ENCODE measurements at regions of chr10 and their contacts with region 1.

Region 1: DNA sequence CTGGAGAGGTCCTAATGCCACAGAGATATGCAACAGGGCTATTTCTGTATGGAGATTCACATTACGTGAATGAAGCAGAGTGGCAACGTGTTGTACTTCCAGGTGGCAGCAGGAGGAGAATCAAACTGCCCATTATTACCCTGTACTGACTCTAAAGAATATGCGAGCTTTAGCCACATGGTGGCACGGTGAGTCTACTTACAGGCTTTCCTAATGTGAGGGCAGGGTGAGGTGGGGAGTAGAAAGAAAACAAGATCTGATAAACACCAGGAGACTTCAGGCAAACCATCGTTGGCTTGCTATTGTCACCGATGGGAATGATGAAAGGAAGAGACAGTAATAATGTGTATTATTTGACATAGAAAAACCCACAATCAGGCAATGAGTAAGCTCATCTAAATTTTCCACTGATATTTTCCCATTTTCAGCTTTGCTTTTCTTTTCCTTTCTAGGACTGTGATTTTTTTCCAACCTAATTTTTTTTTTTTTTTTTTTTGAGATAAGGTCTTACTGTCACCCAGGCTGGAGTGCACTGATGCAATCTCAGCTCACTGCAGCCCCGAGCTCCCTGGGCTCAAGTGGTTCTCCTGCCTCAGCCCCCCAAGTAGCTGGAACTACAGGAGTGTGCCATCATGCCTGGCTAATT is 164.3 kb downstream of the BTAF1 start:
- DNase-seq: peak; percentile 89
- ATAC-seq: peak; percentile 100
- H3K4me3 ChIP-seq: no peak overlapping the region
- H3K27ac ChIP-seq: no peak overlapping the region
- H3K4me1 ChIP-seq: peaks cover 12% of the 10 kb centered on the region
- H3K27me3 ChIP-seq: no peaks in the 10 kb centered on the region
- CTCF ChIP-seq: peak; percentile 89

Region 2: GRCh38 chr10:91816981-91817380 is 270.9 kb before region 1 on chr10:
- CTCF ChIA-PET with region 1: no interaction called
- POLR2A ChIA-PET with region 1: no interaction called
- intact Hi-C with region 1: no loop called
- DNase-seq: no peak
- ATAC-seq: no peak
- H3K4me3 ChIP-seq: no peak overlapping the region
- H3K27ac ChIP-seq: no peak overlapping the region
- H3K4me1 ChIP-seq: no peaks in the 10 kb centered on the region
- H3K27me3 ChIP-seq: no peaks in the 10 kb centered on the region
- CTCF ChIP-seq: no peak

Region 3: GRCh38 chr10:92103376-92104090 is 15.7 kb after region 1 on chr10:
- CTCF ChIA-PET with region 1: interaction called, 10 read pairs
- POLR2A ChIA-PET with region 1: no interaction called
- intact Hi-C with region 1: no loop called
- DNase-seq: peak; percentile 48
- ATAC-seq: peak; percentile 49
- H3K4me3 ChIP-seq: no peak overlapping the region
- H3K27ac ChIP-seq: no peak overlapping the region
- H3K4me1 ChIP-seq: peaks cover 31% of the 10 kb centered on the region
- H3K27me3 ChIP-seq: no peaks in the 10 kb centered on the region
- CTCF ChIP-seq: no peak

Region 4: DNA sequence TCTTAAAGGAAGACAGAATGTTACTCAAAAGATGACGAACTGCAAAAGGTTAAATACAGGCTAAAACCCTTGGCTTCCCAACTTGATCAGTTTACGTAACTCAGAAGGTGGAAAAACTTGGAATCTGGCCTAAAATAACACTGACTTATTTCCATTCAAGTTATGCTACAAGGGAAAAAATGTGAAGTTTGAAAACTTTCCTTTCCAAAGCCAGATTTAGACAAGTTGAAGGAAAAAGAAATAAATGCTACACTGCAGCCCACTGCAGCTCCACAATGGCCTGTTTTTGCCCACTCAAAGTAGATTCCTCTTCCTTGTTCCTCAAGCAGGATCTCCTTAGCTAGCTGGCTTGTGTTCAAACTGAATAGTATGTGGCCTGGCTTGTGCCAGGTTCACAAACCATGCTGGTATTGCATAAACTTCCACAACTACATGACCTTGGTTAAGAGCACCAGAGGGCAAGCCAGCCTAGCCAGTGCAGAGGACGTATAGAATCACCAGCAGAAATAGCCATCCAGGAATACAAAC is 36.8 kb after region 1 on chr10:
- CTCF ChIA-PET with region 1: interaction called, 5 read pairs
- POLR2A ChIA-PET with region 1: no interaction called
- intact Hi-C with region 1: loop called (anchors 5 kb)
- DNase-seq: peak; percentile 83
- ATAC-seq: no peak
- H3K4me3 ChIP-seq: peak overlapping the region; percentile 33; the same call in 1 of the 2 replicates
- H3K27ac ChIP-seq: peak overlapping the region; percentile 80
- H3K4me1 ChIP-seq: peaks cover 51% of the 10 kb centered on the region
- H3K27me3 ChIP-seq: no peaks in the 10 kb centered on the region
- CTCF ChIP-seq: no peak

Region 5: DNA sequence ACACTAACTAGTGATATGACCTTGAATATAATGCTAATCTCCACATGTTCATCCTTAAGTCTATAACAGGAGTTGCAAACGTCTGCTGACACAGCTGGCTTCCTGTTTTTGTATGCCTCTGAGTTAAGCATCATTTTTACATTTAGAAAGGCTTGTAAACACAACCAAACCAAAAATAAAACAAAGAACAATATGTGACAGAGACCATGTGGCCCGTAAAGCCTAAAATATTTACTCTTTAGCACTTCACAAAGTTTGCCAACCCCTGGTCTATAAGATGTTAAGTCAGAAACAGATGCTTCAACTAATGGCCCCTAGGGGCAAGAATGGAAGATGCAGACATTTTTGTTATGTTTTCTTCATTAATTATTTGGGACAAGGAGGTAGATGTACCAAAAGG is 93.7 kb after region 1 on chr10:
- CTCF ChIA-PET with region 1: interaction called, 3 read pairs
- POLR2A ChIA-PET with region 1: no interaction called
- intact Hi-C with region 1: loop called (anchors 2 kb)
- DNase-seq: peak; percentile 9
- ATAC-seq: no peak
- H3K4me3 ChIP-seq: no peak overlapping the region
- H3K27ac ChIP-seq: no peak overlapping the region
- H3K4me1 ChIP-seq: peaks cover 7% of the 10 kb centered on the region
- H3K27me3 ChIP-seq: no peaks in the 10 kb centered on the region
- CTCF ChIP-seq: peak; percentile 44; the same call in 1 of the 2 replicates

Region 6: DNA sequence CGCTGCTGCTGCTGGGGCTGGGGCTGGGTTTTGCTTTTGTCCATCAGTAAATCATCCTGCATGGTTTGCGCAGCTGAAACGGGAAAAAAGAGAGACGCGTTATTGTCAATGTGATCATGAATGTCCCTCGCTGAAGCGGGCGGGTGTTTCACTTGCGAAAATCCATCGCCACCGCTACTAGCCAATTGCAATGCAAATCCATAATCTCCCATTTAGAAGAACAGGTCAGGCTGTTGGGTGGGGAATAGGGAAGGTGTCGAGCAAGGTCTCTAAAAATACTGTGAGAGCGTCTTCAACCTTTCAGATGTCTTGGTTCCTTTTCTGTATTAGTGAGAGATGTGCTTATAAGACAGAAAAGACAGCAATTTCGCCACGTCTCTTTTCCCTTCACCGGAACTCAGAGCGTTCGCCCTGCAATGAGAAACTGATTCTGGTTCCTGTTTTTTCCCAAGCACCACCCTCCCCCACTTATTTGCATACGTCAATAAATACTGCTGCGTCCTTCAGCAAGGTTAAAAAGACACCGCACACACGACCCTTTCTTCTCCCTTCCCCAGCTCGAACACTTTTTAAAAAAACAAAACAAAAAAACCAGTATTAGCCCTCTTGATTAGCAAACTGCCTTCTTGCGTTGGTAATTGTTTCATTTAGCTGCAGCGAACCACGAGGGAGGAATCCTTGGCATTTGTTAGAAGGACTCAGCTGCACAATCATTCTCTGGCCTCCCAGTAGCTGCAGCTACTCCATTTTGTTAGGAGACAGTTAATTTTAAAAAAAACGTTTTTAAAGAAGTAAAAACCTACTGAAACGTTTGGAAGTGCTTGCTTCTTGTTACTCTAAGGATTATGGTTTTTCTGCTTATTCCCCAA is 152.7 kb after region 1 on chr10:
- CTCF ChIA-PET with region 1: no interaction called
- POLR2A ChIA-PET with region 1: no interaction called
- intact Hi-C with region 1: loop called (anchors 2 kb)
- DNase-seq: peak; percentile 59
- ATAC-seq: peak; percentile 39
- H3K4me3 ChIP-seq: peak overlapping the region; percentile 75
- H3K27ac ChIP-seq: 0 out of 2 replicates have a peak overlapping the region, but pooled peaks have one; percentile 4
- H3K4me1 ChIP-seq: peaks cover 45% of the 10 kb centered on the region
- H3K27me3 ChIP-seq: no peaks in the 10 kb centered on the region
- CTCF ChIP-seq: no peak

Region 7: DNA sequence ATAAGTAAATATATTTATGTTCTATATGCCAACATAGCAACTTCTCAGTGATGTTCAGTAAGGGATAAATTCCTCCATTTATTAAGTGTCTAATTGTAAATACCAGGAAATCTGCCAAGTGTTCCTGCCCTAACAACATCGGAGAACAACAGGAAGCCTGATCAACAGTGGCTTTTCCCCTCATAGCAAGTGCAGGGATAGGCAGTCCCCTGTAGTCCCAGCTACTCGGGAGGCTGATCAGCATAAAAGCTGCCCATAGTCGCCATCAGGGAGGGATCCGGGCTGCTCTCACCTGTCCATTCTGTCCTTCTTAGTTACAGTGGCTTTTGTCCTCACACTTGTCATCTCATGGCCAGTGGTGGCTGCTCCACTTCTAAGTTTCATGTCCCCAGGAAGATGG is 344.7 kb after region 1 on chr10:
- CTCF ChIA-PET with region 1: interaction called, 13 read pairs
- POLR2A ChIA-PET with region 1: no interaction called
- intact Hi-C with region 1: loop called (anchors 1 kb)
- DNase-seq: no peak
- ATAC-seq: no peak
- H3K4me3 ChIP-seq: no peak overlapping the region
- H3K27ac ChIP-seq: no peak overlapping the region
- H3K4me1 ChIP-seq: no peaks in the 10 kb centered on the region
- H3K27me3 ChIP-seq: no peaks in the 10 kb centered on the region
- CTCF ChIP-seq: no peak

Measured in PC-3 (cell line).